Calu3 (cell line): ENCODE measurements at regions of chr10 and their contacts with region 1.

Region 1: GRCh38 chr10:61869774-61870525 is 31.5 kb upstream of the ARID5B start:
- DNase-seq: no peak
- H3K4me3 Mint-ChIP-seq: no peak overlapping the region
- H3K27ac Mint-ChIP-seq: no peak overlapping the region
- H3K4me1 Mint-ChIP-seq: peaks cover 23% of the 10 kb centered on the region
- H3K27me3 Mint-ChIP-seq: peaks cover 7% of the 10 kb centered on the region
- CTCF ChIP-seq: no peak

Region 2: DNA sequence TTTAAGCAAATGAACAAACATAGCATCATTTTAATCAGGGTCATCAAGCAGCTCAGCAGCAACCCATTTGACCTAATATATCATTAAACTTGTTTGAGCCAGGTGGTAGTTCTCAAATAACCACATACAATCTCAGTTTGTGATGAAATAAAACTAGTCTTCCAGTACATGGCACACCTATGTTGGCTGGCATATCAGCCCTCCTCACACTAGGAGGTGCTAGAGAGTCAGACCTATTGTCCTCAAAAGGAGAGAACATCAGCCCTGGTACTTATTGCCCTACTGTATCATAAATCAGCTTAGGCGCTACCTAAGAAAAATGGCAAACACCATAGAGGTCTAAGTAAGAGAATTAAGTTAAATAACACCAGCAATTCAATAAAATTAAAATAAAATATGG is 125.5 kb before region 1 on chr10:
- CTCF ChIA-PET with region 1: no interaction called
- intact Hi-C with region 1: no loop called
- DNase-seq: no peak
- H3K4me3 Mint-ChIP-seq: no peak overlapping the region
- H3K27ac Mint-ChIP-seq: no peak overlapping the region
- H3K4me1 Mint-ChIP-seq: peaks cover 10% of the 10 kb centered on the region
- H3K27me3 Mint-ChIP-seq: no peaks in the 10 kb centered on the region
- CTCF ChIP-seq: no peak

Region 3: DNA sequence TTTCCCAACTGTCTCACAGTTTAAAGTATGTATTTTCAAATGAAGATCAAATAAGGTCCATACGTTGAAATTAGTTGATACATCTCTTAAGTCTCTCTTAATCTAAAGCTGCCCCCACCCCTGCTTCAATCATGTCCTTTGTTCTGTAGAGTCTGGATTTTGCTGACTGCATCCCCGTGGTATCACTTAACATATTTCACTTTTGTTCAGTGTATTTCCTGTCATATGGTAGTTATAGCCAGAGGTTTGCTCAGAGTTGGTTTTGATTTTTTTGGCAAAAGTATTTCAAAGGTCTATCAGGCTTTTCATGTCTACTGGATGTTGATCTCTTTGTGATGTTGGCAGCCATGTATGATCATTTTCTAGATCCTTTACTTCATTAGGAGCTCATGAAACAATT is 22.9 kb before region 1 on chr10:
- CTCF ChIA-PET with region 1: interaction called, 10 read pairs
- intact Hi-C with region 1: no loop called
- DNase-seq: no peak
- H3K4me3 Mint-ChIP-seq: no peak overlapping the region
- H3K27ac Mint-ChIP-seq: no peak overlapping the region
- H3K4me1 Mint-ChIP-seq: no peaks in the 10 kb centered on the region
- H3K27me3 Mint-ChIP-seq: no peaks in the 10 kb centered on the region
- CTCF ChIP-seq: no peak